ENCODE measurements at regions of chr15 and their contacts with region 1.

Region 1: GRCh38 chr15:64809649-64810496 is 15.6 kb downstream of the PIF1 start:
- DNase-seq: peak in 1 of 2 experiments; percentile 97
- H3K4me3 ChIP-seq: peak overlapping the region in 3 of 4 experiments; percentile 26 to 53 (median 26); a peak in 7 of 8 replicates
- H3K27ac ChIP-seq: peak overlapping the region; percentile 95
- H3K4me1 ChIP-seq: peaks cover 28 to 56% (median 44%) of the 10 kb centered on the region in 4 experiments
- H3K27me3 ChIP-seq: no peaks in the 10 kb centered on the region
- CTCF ChIP-seq: peak; percentile 87 to 94 (median 93)
- EP300 ChIP-seq: no peak
- POLR2A ChIP-seq: no peak; a peak in 1 of 3 replicates
- RAD21 ChIP-seq: peak; percentile 87 to 95

Region 2: DNA sequence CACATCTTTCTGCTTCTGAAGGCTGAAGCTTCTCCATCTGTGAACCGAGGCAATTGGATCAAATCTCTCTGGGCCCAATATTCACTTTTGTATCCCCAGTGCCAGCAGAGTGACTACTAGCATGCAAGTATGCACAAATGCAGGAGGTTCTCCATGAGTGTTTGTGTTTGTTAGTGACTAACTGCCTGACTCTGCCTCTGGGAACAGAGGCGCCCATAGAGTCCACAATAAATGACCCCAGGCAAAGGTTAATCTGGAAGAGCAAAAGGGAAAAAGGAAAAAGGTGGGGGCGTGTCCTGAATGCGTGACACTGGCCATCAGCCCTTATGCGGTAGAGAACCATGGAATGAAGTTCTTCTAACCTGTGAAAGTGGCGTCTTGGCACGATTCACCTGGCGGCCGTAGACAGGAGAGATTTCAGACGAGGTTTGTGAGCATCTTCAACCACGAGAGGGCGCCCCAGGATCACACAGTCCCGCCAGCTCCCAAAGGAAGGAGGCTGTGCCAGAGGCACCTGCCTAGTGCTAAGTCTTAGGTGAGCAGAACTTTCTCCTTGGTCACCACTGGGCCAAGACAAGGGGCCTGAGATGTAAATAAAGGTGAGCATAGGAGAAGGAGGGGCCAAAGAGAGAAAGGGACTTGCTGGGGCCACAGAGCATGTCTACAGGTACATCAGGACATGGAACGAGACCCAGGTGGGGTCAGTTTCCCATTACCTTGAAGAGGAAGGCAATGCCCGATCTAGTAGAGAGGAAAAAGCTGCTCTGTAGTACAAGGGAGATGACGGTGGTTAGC is 78.7 kb before region 1 on chr15:
- CTCF ChIA-PET with region 1: interaction called, 883 read pairs
- POLR2A ChIA-PET with region 1: interaction called, 157 read pairs
- DNase-seq: peak; percentile 69 to 97
- H3K4me3 ChIP-seq: peak overlapping the region in 1 of 4 experiments; percentile 14; a peak in 1 of 8 replicates
- H3K27ac ChIP-seq: no peak overlapping the region
- H3K4me1 ChIP-seq: peaks cover 7 to 14% (median 10%) of the 10 kb centered on the region in 4 experiments
- H3K27me3 ChIP-seq: no peaks in the 10 kb centered on the region
- CTCF ChIP-seq: peak; percentile 73 to 97 (median 95)
- EP300 ChIP-seq: 0 out of 3 replicates have a peak, but pooled peaks of 1 of the 2 experiments have one; percentile 24
- POLR2A ChIP-seq: no peak; a peak in 1 of 3 replicates
- RAD21 ChIP-seq: peak; percentile 98

Region 3: GRCh38 chr15:64761156-64761555 is 48.7 kb before region 1 on chr15:
- CTCF ChIA-PET with region 1: interaction called, 883 read pairs
- POLR2A ChIA-PET with region 1: interaction called, 31 read pairs
- DNase-seq: no peak
- H3K4me3 ChIP-seq: no peak overlapping the region
- H3K27ac ChIP-seq: no peak overlapping the region
- H3K4me1 ChIP-seq: peaks cover 0 to 29% (median 14%) of the 10 kb centered on the region in 4 experiments; a peak in 5 of 7 replicates
- H3K27me3 ChIP-seq: no peaks in the 10 kb centered on the region
- CTCF ChIP-seq: no peak
- EP300 ChIP-seq: no peak
- POLR2A ChIP-seq: no peak
- RAD21 ChIP-seq: no peak

Region 4: GRCh38 chr15:64792282-64792681 is 17.6 kb before region 1 on chr15:
- CTCF ChIA-PET with region 1: interaction called, 21 read pairs
- POLR2A ChIA-PET with region 1: interaction called, 748 read pairs
- DNase-seq: no peak
- H3K4me3 ChIP-seq: no peak overlapping the region
- H3K27ac ChIP-seq: no peak overlapping the region
- H3K4me1 ChIP-seq: no peaks in the 10 kb centered on the region
- H3K27me3 ChIP-seq: no peaks in the 10 kb centered on the region
- CTCF ChIP-seq: no peak
- EP300 ChIP-seq: no peak
- POLR2A ChIP-seq: no peak
- RAD21 ChIP-seq: no peak

Region 5: GRCh38 chr15:64841258-64842095 is 31.6 kb after region 1 on chr15 and contains the start of gene PLEKHO2:
- CTCF ChIA-PET with region 1: interaction called, 53 read pairs
- POLR2A ChIA-PET with region 1: interaction called, 381 read pairs
- DNase-seq: peak; percentile 87 to 94
- H3K4me3 ChIP-seq: peak within 1 kb of the TSS; percentile 90 to 99 (median 92)
- H3K27ac ChIP-seq: peak within 1 kb of the TSS; percentile 59; the same call in 1 of the 2 replicates
- H3K4me1 ChIP-seq: peaks cover 13 to 25% (median 17%) of the 10 kb centered on the region in 4 experiments; a peak in 6 of 7 replicates
- H3K27me3 ChIP-seq: no peaks in the 10 kb centered on the region
- CTCF ChIP-seq: peak; percentile 20 to 30 (median 28); a peak in 2 of 4 replicates
- EP300 ChIP-seq: no peak
- POLR2A ChIP-seq: peak; percentile 63 to 64
- RAD21 ChIP-seq: peak; percentile 11 to 15; a peak in 3 of 4 replicates
- total RNA-seq, gene PLEKHO2: 20.1 and 20.3 TPM in 2 replicates

Region 6: DNA sequence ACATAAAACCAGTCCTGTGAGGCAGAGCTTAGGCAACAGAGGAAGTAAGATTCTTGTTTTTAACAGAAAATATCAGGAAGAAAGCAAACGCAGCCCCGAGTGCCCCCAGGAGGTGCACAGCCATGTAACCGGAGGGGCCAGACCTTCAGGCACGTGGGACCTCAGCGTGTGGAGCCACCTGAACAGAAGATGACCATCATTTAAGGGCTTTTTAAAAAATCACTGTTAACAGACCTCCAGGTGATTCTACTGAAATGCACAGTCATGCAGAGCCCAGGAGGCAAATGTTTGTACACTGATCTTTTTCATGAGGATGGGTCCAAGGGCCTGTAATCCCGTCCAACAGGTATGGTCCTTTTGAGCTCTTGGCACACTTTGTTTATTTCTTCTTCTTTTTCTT is 141.0 kb after region 1 on chr15:
- CTCF ChIA-PET with region 1: no interaction called
- POLR2A ChIA-PET with region 1: no interaction called
- DNase-seq: peak in 1 of 2 experiments; percentile 40
- H3K4me3 ChIP-seq: no peak overlapping the region
- H3K27ac ChIP-seq: no peak overlapping the region
- H3K4me1 ChIP-seq: no peaks in the 10 kb centered on the region
- H3K27me3 ChIP-seq: no peaks in the 10 kb centered on the region
- CTCF ChIP-seq: no peak
- EP300 ChIP-seq: no peak
- POLR2A ChIP-seq: no peak
- RAD21 ChIP-seq: no peak

Measured in H1 (cell line).